ENCODE measurements at regions of chr1 and their contacts with region 1.

Region 1: GRCh38 chr1:107277022-107277421 is 136.2 kb downstream of the NTNG1 start:
- DNase-seq: peak; percentile 23
- H3K4me3 ChIP-seq: no peak overlapping the region
- H3K27ac ChIP-seq: no peak overlapping the region
- H3K4me1 ChIP-seq: no peaks in the 10 kb centered on the region; a peak in 2 of 4 replicates
- H3K27me3 ChIP-seq: no peaks in the 10 kb centered on the region
- CTCF ChIP-seq: peak; percentile 54
- EP300 ChIP-seq: no peak
- RAD21 ChIP-seq: peak; percentile 67

Region 2: DNA sequence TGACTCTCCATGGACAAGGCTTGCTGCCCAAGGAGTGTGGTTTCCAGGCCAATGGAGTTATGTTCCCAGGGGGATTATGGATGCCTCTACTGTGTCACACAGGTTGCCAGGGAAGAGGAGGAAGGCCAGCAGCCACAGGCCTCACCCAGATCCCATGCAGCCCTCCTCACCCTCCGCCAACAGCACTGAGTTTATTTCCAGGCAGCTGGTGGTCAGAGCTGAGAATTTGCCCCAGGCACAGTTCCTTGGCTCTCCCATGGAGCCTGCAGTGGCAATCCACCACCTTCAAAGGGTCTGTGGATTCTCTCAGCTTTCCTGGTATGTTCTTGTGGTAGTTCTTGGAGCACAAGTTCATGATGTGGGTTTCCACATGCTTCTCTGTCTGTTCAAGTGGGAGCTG is 57.0 kb before region 1 on chr1:
- CTCF ChIA-PET with region 1: no interaction called
- POLR2A ChIA-PET with region 1: no interaction called
- DNase-seq: no peak
- H3K4me3 ChIP-seq: no peak overlapping the region
- H3K27ac ChIP-seq: no peak overlapping the region
- H3K4me1 ChIP-seq: peaks cover 0 to 8% of the 10 kb centered on the region in 2 experiments; a peak in 3 of 4 replicates
- H3K27me3 ChIP-seq: no peaks in the 10 kb centered on the region
- CTCF ChIP-seq: no peak
- EP300 ChIP-seq: no peak
- RAD21 ChIP-seq: no peak

Region 3: GRCh38 chr1:107254299-107254698 is 22.7 kb before region 1 on chr1:
- CTCF ChIA-PET with region 1: interaction called, 11 read pairs
- POLR2A ChIA-PET with region 1: no interaction called
- DNase-seq: no peak
- H3K4me3 ChIP-seq: no peak overlapping the region
- H3K27ac ChIP-seq: no peak overlapping the region
- H3K4me1 ChIP-seq: peaks cover 0 to 34% of the 10 kb centered on the region in 2 experiments; a peak in 1 of 4 replicates
- H3K27me3 ChIP-seq: no peaks in the 10 kb centered on the region
- CTCF ChIP-seq: no peak
- EP300 ChIP-seq: no peak
- RAD21 ChIP-seq: no peak

Region 4: DNA sequence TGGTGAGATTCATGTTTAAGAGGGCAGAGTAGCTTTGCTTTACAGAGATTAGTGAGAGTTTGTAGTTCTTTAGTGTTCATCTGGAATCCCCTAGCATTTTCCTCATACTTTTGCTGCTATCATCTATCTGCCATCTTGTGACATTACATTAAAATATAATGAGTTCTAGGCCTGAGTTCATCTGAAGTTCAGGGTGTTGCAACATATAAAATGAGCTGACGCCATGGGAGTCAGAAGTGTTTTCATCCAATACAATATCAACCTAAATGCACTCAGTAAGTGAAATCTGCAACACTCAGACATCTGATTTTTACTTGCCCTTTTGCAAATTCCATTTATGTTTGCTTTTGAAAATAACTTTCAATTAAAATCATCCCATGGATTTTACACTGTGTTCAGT is 17.7 kb after region 1 on chr1:
- CTCF ChIA-PET with region 1: interaction called, 15 read pairs
- POLR2A ChIA-PET with region 1: no interaction called
- DNase-seq: no peak
- H3K4me3 ChIP-seq: no peak overlapping the region
- H3K27ac ChIP-seq: no peak overlapping the region
- H3K4me1 ChIP-seq: peaks cover 0 to 5% of the 10 kb centered on the region in 2 experiments; a peak in 2 of 4 replicates
- H3K27me3 ChIP-seq: no peaks in the 10 kb centered on the region
- CTCF ChIP-seq: no peak
- EP300 ChIP-seq: no peak
- RAD21 ChIP-seq: no peak